ENCODE measurements at regions of chr1 and their contacts with region 1.

Region 1: DNA sequence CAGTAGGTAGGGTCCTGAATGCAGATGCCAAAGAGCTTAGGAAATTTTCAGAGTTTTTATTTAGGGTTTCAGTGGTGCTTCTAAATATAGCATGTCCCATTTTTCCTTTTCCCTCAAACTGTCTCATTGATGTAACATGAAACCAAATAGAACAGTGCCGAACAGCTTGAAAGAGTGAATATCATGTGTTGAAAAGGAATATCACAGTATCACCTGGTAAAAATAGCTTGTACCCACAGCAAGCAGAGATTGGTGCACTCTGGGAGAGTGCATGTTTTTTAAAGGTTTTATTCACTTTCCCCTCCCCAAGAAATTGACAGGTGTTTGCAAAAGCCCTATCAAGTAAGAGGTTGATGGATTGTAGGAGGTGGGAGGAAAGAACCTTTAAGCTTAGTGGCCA is 41.9 kb upstream of the ELAVL4 start:
- DNase-seq: no peak
- ATAC-seq: peak in 1 of 4 donors; percentile 61
- H3K4me3 ChIP-seq: no peak overlapping the region
- H3K27ac ChIP-seq: no peak overlapping the region
- H3K4me1 ChIP-seq: peaks cover 0 to 3% (median 0%) of the 10 kb centered on the region in 12 donors
- H3K27me3 ChIP-seq: no peaks in the 10 kb centered on the region
- CTCF ChIP-seq: no peak
- POLR2A ChIP-seq: no peak

Region 2: DNA sequence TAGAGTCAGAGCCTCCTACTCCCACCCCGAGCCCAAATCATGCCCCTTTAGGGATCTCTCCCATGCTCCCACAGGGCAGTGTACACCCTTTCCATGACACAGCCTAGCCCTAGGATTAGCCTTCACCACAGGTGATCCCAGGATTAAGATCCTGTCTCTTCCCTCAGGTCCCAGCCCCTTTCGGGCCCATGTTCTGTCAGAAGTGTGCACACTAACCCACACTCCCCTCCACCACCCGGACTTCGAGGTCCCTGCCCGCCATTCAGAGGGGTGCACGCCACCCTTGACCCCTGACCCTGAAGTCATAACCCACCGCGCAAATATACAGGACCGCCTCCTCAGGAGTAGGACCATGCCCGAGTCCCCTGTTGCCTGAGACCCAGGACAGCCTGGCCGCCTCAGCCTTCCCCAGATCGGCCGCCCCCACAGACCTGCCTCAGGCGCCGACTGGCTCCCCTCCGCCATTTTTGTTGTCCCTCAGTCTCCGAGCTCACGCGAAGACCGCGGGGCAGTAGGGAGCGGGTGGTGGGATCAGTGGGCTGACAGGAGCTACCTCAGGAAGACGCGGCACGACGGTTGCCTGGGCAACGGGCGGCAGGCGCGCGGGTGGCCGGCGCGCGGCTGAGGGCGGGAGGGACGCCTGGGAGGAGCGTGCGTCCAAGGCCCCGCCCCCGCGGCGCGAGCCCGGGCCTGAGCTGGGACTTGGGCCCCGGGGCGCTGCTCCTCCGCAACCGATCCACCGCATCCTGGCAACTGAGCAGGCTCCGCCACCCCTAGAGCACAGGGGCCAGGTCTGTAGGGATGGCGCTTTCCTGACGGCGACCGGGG is 43.3 kb before region 1 on chr1 and contains the start of gene AGBL4:
- intact Hi-C with region 1: loop called in 1 of 10 experiments (anchors 2 kb)
- DNase-seq: peak; percentile 23 to 78 (median 52)
- ATAC-seq: peak; percentile 32 to 99 (median 90)
- H3K4me3 ChIP-seq: peak within 1 kb of the TSS; percentile 37 to 67 (median 54)
- H3K27ac ChIP-seq: peak within 1 kb of the TSS in 1 of 12 donors; percentile 29
- H3K4me1 ChIP-seq: peaks cover 0 to 12% (median 0%) of the 10 kb centered on the region in 12 donors
- H3K27me3 ChIP-seq: peaks cover 0 to 22% (median 7%) of the 10 kb centered on the region in 9 donors
- CTCF ChIP-seq: no peak
- POLR2A ChIP-seq: no peak
- total RNA-seq, gene AGBL4: 0.40 to 1.4 (median 0.54) TPM in 8 of 9 donors, not detected in the other

Region 3: GRCh38 chr1:50193002-50193401 is 126.2 kb after region 1 on chr1:
- intact Hi-C with region 1: no loop called
- DNase-seq: no peak
- ATAC-seq: no peak
- H3K4me3 ChIP-seq: no peak overlapping the region
- H3K27ac ChIP-seq: no peak overlapping the region
- H3K4me1 ChIP-seq: no peaks in the 10 kb centered on the region
- H3K27me3 ChIP-seq: peaks cover 0 to 9% (median 0%) of the 10 kb centered on the region in 9 donors
- CTCF ChIP-seq: no peak
- POLR2A ChIP-seq: no peak